ENCODE measurements at regions of chr10 and their contacts with region 1.

Region 1: DNA sequence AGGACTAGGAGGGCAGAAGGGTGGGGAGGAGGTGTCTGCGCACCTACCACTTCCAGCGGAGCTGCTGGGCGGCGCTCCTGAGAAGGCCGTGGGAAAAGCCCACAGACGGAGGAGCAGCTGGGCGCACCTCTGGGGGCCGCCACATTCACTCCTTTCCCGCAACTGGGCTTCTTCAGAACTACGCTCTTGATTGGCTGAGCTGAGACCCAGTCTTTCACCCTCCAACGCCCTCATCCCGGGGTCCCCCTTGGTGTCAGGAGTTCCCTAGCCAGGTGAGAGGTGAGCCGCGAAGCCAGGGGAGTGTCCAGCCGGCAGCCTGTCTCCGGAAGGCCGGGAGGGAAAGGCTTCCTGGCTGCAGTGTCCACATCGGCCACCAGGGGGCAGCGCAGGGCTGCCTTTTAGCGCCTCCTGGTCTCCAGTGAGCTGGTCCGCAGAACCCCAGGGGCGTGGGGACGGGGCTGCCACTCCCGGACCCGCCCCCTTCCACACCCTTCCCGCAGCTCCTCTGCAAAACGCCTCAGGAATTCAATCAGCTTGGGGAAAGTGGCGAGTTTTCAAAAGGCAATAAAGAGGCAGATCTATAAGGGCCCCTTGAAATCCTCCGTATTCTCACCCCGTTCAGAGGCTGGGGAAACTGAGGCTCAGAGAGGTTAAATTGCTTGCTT is 98.8 kb downstream of the CHST15 start:
- DNase-seq: peak; percentile 63
- ATAC-seq: peak; percentile 91
- H3K4me3 ChIP-seq: no peak overlapping the region
- H3K27ac ChIP-seq: no peak overlapping the region
- H3K4me1 ChIP-seq: peaks cover 3% of the 10 kb centered on the region; the same call in 1 of the 2 replicates
- H3K27me3 ChIP-seq: peaks cover 4% of the 10 kb centered on the region; the same call in 1 of the 2 replicates
- CTCF ChIP-seq: peak; percentile 89
- POLR2A ChIP-seq: no peak
- RAD21 ChIP-seq: peak; percentile 85

Region 2: DNA sequence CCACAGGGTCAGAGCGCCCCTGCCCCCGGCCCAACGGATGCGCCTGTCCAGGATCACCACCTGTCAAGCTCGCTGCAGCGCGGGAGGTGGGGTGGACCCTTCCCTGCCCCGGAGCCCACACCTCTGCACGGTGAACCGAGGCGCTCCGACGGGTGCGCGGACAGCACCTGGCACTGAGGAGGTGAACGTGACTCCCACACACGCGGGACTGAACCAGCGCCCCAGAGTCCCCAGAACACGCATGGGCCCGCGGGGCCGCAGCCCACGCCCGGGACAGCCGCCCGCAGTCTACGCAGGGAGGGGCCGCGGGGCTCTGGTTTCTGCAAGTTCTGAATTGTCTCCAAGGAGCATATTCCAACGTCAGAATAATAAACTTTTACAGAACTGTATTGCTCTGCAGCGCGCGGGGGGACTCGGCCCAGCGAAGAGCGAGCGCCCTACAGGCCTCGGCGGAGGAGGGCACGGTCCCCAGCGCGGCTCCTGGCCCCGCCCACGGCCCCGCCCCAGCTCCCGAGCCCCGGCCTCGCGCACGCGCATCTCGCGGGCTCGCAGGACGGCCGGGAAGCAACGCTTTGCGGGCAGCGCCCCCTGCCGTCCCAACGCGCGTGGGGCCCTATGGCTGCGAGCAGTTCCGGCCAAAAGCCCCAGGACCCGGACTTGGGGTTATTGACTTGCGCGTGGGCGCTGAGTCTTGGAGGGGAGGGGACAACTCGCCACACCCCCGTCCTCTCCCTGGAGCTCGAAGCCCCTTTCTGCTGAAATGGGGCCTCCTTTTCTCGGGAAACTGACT is 394.5 kb after region 1 on chr10:
- CTCF ChIA-PET with region 1: interaction called, 18 read pairs
- POLR2A ChIA-PET with region 1: no interaction called
- dilution Hi-C with region 1: loop called (anchors 25 kb)
- in situ Hi-C with region 1: loop called (anchors 5 kb)
- intact Hi-C with region 1: loop called (anchors 1 kb)
- DNase-seq: peak; percentile 71
- ATAC-seq: peak; percentile 99
- H3K4me3 ChIP-seq: peak overlapping the region; percentile 26; the same call in 1 of the 2 replicates
- H3K27ac ChIP-seq: no peak overlapping the region
- H3K4me1 ChIP-seq: no peaks in the 10 kb centered on the region
- H3K27me3 ChIP-seq: no peaks in the 10 kb centered on the region; the same call in 1 of the 2 replicates
- CTCF ChIP-seq: peak; percentile 97
- POLR2A ChIP-seq: no peak
- RAD21 ChIP-seq: peak; percentile 92

Region 3: DNA sequence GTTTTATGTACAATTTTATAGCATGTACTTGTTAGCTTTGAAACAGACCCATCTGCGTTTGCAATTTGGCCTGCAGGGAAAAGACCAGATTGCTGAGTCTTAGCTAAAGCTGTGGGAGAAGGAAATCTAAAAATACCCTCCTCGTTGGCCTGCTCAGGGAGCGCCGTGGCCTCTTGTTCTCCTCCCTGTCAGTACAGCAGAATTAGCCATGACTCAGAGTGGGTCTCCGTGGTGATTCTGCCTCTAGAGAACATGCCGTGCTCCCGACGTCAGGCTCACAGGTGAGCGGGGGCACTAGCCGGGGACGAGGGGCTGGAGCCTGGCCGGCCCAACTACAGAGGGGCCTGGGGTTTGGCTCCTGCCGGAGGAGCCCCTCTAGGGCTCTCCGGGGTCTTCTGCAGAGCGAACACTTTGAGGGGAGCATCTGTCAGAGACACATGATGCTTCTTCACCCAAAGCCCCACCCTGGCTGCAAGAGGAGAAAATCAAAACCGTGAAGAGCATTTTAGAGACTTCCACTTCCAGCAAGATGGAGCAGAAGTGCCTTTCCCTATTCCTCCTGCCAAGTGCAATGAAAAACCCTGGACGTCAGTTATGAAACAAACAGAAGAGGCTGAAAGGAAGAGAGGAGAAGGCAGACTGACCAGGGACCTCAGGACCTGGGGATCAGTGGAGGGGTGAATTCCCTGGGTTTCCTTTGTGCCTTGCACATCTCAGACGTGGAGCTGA is 566.0 kb after region 1 on chr10:
- CTCF ChIA-PET with region 1: no interaction called
- POLR2A ChIA-PET with region 1: no interaction called
- dilution Hi-C with region 1: no loop called
- in situ Hi-C with region 1: no loop called
- intact Hi-C with region 1: no loop called
- DNase-seq: peak; percentile 62
- ATAC-seq: peak; percentile 60; the same call in 1 of the 2 replicates
- H3K4me3 ChIP-seq: no peak overlapping the region
- H3K27ac ChIP-seq: no peak overlapping the region
- H3K4me1 ChIP-seq: no peaks in the 10 kb centered on the region
- H3K27me3 ChIP-seq: peaks cover 8% of the 10 kb centered on the region
- CTCF ChIP-seq: no peak
- POLR2A ChIP-seq: no peak
- RAD21 ChIP-seq: no peak